Activated CD4-positive, alpha-beta memory T cell treated with anti-CD3 and anti-CD28 coated beads for 36 hours (primary cell): ENCODE measurements at regions of chr20 and their contacts with region 1.

Region 1: DNA sequence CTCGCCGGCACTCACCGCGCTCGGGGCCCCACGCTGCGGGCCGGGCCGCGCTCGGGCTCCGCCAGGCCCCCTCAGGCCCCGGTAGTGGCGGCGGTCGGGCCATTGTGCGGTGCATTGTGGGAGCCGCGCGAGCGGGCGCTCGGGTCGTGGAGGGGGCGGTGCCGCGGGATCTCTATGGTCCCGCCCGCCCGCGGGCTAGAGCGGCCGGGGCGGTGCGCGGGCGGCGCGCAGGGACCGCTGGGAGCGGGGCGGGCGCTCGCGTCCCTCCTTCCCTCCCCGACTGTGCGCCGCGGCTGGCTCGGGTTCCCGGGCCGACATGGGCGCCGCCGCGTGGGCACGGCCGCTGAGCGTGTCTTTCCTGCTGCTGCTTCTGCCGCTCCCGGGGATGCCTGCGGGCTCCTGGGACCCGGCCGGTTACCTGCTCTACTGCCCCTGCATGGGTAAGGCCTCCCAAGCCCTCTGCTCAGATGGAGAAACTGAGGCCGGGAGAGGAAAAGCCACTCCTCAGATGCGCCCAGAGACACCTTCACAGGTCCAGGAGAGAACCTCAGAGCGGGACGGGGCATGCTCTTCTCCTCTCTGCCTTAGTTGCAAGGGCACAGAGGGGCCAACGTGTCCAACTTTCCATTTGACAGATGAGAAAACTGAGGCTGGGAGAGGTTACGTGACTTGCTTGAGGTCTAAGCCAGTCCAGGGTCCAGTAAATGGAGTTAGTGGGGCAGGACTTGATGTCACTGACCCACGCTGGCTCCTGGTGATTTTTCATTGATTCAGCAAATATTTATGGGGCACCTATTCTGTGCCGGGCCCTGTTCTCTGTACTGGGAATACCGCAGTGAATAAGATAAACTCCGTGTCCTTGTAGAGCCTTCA is at the starts of genes PLAGL2 and POFUT1:
- DNase-seq: peak; percentile 93
- H3K4me3 Mint-ChIP-seq: peak within 1 kb of the TSS; percentile 99
- H3K27ac Mint-ChIP-seq: peak within 1 kb of the TSS; percentile 95
- H3K4me1 Mint-ChIP-seq: peaks cover 65% of the 10 kb centered on the region
- H3K27me3 Mint-ChIP-seq: no peaks in the 10 kb centered on the region
- total RNA-seq, gene PLAGL2: 93.9 to 95.6 TPM
- total RNA-seq, gene POFUT1: 48.4 to 48.5 TPM

Region 2: GRCh38 chr20:32139946-32140345 is 67.9 kb before region 1 on chr20:
- CTCF ChIA-PET with region 1: no interaction called
- POLR2A ChIA-PET with region 1: no interaction called
- intact Hi-C with region 1: no loop called
- DNase-seq: no peak
- H3K4me3 Mint-ChIP-seq: no peak overlapping the region
- H3K27ac Mint-ChIP-seq: no peak overlapping the region
- H3K4me1 Mint-ChIP-seq: no peaks in the 10 kb centered on the region
- H3K27me3 Mint-ChIP-seq: no peaks in the 10 kb centered on the region

Region 3: DNA sequence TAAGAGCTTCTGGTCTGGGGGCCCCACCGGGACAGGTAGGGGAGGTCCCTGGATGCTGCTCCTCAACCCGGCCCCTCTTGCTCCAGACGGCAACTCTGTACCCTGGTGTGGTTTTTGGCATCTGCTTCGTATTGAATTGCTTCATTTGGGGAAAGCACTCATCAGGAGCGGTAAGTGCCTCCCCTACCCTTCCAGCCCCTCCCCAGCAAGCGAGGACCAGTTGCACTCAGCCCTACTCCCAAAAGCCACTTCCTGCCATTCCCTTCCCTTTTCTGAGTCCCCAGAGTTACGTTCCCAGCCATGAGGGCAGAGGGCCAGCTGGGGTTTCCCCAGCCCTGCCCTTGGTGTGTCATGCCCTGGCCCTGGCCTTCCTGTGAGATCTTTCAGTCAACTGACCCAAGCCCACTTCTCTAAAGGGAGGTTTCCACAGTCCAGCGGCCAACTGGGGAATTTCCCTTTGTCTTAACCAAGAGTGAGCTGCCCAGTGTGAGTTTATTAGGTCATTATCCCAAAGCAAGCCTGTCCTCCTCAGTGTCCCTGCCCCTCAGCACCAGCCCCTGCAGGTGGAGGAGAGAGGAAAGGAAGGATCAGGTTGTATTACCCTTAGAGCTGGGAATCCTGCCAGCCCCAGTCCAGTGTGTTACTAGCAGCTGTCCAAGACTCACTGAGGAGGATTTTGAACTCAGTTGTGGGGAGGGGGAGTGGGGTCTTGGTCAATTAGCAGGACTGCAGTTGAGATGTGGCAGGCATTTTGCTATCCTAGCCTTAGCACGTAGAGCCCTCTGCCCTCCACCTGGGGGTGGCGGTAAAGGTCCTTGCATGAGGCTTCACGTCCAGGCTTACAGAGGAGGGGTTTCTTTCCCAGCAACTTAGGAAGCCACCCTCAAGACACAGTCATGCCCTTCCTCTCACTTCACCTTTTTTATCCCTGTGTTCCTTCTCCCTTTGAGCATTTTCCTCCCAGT is 52.6 kb before region 1 on chr20:
- CTCF ChIA-PET with region 1: no interaction called
- POLR2A ChIA-PET with region 1: no interaction called
- intact Hi-C with region 1: loop called (anchors 5 kb)
- DNase-seq: peak; percentile 46
- H3K4me3 Mint-ChIP-seq: no peak overlapping the region
- H3K27ac Mint-ChIP-seq: peak overlapping the region; percentile 33
- H3K4me1 Mint-ChIP-seq: peaks cover 10% of the 10 kb centered on the region
- H3K27me3 Mint-ChIP-seq: no peaks in the 10 kb centered on the region

Region 4: DNA sequence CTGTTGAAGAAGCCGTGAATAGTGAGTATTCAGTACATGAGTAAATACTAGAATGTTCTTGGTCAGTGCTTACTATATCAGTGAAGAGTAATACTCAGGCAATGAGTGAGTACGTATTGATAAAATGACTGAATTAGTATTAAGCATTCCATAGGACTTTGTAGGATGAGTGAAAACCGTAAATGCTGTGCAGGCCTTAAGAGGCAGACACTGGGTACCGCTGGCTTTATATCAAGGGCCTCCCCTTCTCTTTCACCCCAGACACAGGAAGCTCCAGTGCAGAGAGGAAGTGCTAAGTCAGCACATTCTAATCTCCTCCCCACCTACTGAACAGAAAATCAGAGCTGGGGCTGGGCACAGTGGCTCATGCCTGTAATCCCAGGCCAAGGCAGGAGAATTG is 24.0 kb after region 1 on chr20:
- CTCF ChIA-PET with region 1: interaction called, 3 read pairs
- POLR2A ChIA-PET with region 1: interaction called, 33 read pairs
- intact Hi-C with region 1: loop called (anchors 1 kb)
- DNase-seq: peak; percentile 75
- H3K4me3 Mint-ChIP-seq: peak overlapping the region; percentile 45
- H3K27ac Mint-ChIP-seq: peak overlapping the region; percentile 97
- H3K4me1 Mint-ChIP-seq: peaks cover 50% of the 10 kb centered on the region
- H3K27me3 Mint-ChIP-seq: no peaks in the 10 kb centered on the region

Region 5: DNA sequence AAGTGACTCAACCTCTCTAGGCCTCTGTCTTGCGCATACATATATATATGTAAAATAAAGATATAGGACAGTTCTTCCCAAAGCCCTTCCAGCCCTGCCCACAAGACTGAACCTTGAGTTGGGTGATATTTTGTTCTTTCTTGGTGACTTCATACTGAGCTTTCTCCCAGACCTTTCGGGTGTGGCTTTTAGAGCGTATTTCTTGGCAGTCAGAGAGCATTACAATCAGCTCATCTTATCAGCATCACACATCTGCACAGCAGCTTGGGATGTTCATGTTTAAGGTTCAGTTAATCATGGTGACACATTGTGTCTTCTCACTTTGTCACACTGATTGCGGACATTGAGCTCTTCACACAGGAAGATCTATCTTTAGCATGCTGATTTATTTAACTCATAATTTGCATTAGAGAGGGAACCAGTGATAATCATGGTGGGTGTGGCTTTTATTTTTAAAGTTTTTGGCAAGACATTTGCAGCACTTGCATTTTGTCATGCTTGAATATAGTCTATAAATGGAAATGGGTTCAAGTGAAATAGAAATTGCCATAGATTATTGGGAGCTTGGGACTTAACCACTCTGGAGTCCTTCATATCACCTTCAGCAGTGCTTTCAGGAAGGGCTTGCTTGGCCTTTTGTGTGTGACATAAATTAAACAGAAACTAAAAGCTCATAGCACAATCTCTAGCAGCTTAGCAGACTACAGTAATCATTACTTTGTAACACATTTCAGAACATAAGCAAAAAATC is 77.9 kb after region 1 on chr20:
- CTCF ChIA-PET with region 1: interaction called, 4 read pairs
- POLR2A ChIA-PET with region 1: interaction called, 41 read pairs
- intact Hi-C with region 1: loop called (anchors 1 kb)
- DNase-seq: peak; percentile 69
- H3K4me3 Mint-ChIP-seq: peak overlapping the region; percentile 62
- H3K27ac Mint-ChIP-seq: peak overlapping the region; percentile 91
- H3K4me1 Mint-ChIP-seq: peaks cover 85% of the 10 kb centered on the region
- H3K27me3 Mint-ChIP-seq: no peaks in the 10 kb centered on the region

Region 6: GRCh38 chr20:32484958-32485769 is 277.3 kb after region 1 on chr20:
- CTCF ChIA-PET with region 1: no interaction called
- POLR2A ChIA-PET with region 1: no interaction called
- intact Hi-C with region 1: loop called (anchors 1 kb)
- DNase-seq: peak; percentile 91
- H3K4me3 Mint-ChIP-seq: peak overlapping the region; percentile 86
- H3K27ac Mint-ChIP-seq: peak overlapping the region; percentile 93
- H3K4me1 Mint-ChIP-seq: peaks cover 26% of the 10 kb centered on the region
- H3K27me3 Mint-ChIP-seq: no peaks in the 10 kb centered on the region